Ovary (tissue), 10 donors: ENCODE measurements at regions of chr4 and their contacts with region 1.

Region 1: GRCh38 chr4:164755432-164755831 is 1.5 kb downstream of the SMIM31 start:
- DNase-seq: no peak
- H3K4me3 ChIP-seq: no peak overlapping the region
- H3K27ac ChIP-seq: no peak overlapping the region
- H3K4me1 ChIP-seq: no peaks in the 10 kb centered on the region
- H3K27me3 ChIP-seq: no peaks in the 10 kb centered on the region
- CTCF ChIP-seq: no peak
- EP300 ChIP-seq: no peak
- POLR2A ChIP-seq: no peak

Region 2: GRCh38 chr4:163048447-163048846 is 1707.0 kb before region 1 on chr4:
- intact Hi-C with region 1: loop called in 1 of 4 experiments (anchors 5 kb)
- DNase-seq: no peak
- H3K4me3 ChIP-seq: no peak overlapping the region
- H3K27ac ChIP-seq: no peak overlapping the region
- H3K4me1 ChIP-seq: no peaks in the 10 kb centered on the region
- H3K27me3 ChIP-seq: no peaks in the 10 kb centered on the region
- CTCF ChIP-seq: no peak
- EP300 ChIP-seq: no peak
- POLR2A ChIP-seq: no peak

Region 3: DNA sequence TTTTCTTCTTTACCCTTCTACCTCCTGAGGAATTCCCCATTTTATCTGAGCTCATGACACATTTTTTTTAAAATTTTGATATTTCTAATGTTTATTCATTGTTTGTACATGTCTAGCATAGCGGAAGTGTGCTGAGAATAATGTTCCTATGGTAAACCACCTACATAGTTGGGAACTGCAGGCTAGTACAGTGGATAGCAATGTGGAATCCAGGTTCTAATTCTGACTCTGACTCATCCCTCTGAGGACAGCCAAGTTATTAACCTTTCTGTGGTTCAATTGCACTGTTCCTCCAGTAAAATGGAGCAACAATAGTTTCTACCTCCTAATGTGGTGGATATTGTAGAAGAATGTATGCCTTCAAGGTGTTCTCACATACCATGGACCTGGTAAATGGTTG is 101.0 kb after region 1 on chr4:
- intact Hi-C with region 1: no loop called
- DNase-seq: no peak
- H3K4me3 ChIP-seq: no peak overlapping the region
- H3K27ac ChIP-seq: no peak overlapping the region
- H3K4me1 ChIP-seq: no peaks in the 10 kb centered on the region
- H3K27me3 ChIP-seq: no peaks in the 10 kb centered on the region
- CTCF ChIP-seq: no peak
- EP300 ChIP-seq: no peak
- POLR2A ChIP-seq: no peak

Region 4: GRCh38 chr4:164876700-164877324 is 121.4 kb after region 1 on chr4 and contains the start of gene APELA:
- intact Hi-C with region 1: no loop called
- DNase-seq: no peak
- H3K4me3 ChIP-seq: no peak within 1 kb of the TSS
- H3K27ac ChIP-seq: no peak within 1 kb of the TSS
- H3K4me1 ChIP-seq: no peaks in the 10 kb centered on the region
- H3K27me3 ChIP-seq: no peaks in the 10 kb centered on the region
- CTCF ChIP-seq: no peak
- EP300 ChIP-seq: no peak
- POLR2A ChIP-seq: no peak
- total RNA-seq, gene APELA: 0.10 TPM in 1 of 7 donors, not detected in the others